Activated naive CD4-positive, alpha-beta T cell treated with anti-CD3 and anti-CD28 coated beads for 36 hours (primary cell): ENCODE measurements at regions of chr11 and their contacts with region 1.

Region 1: DNA sequence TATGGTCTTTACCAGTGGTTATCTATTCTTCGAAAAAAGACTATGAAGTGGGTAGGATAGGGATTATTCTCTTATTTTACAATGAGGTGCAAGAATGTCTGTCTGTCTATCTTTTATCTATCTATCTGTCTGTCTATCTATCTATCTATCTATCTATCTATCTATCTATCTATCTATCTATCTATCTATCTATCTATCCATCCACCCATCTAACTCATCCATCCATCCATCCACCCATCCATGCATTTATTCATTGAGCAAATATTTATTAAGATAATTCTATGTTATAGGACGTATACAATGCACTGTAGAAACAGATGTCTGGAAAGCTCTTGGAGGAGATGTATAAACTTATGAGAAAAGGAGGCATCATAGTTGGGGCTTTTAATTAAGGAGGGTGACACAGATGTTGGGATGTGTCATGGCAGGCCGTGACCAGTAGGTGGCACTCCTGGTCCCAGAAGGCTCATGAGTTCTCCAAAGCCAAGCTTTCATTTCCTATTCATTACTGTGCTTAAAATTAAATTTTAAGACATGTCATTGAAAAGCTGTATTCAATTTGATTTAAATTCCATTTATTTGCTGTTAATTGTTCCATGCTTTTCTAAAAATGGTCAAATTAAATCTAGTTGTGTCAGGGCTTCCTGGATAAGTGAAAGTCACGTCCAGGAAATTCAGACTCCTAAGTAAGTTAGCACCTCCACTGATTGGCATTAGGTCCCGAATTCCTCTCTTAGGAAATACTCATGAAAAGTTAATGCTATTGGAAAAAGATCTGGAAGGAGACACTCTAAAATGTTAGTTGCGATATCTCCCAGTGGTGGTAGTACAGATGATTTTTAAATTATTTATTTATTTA is 19.0 kb upstream of the E2F8 start:
- DNase-seq: peak; percentile 82
- H3K4me3 Mint-ChIP-seq: no peak overlapping the region
- H3K27ac Mint-ChIP-seq: no peak overlapping the region
- H3K4me1 Mint-ChIP-seq: no peaks in the 10 kb centered on the region
- H3K27me3 Mint-ChIP-seq: peaks cover 7% of the 10 kb centered on the region

Region 2: GRCh38 chr11:19232910-19233503 is 26.7 kb before region 1 on chr11:
- CTCF ChIA-PET with region 1: no interaction called
- intact Hi-C with region 1: no loop called
- DNase-seq: no peak
- H3K4me3 Mint-ChIP-seq: no peak overlapping the region
- H3K27ac Mint-ChIP-seq: no peak overlapping the region
- H3K4me1 Mint-ChIP-seq: peaks cover 2% of the 10 kb centered on the region
- H3K27me3 Mint-ChIP-seq: peaks cover 10% of the 10 kb centered on the region

Region 3: GRCh38 chr11:19275481-19275880 is 15.8 kb after region 1 on chr11:
- CTCF ChIA-PET with region 1: interaction called, 11 read pairs
- intact Hi-C with region 1: no loop called
- DNase-seq: no peak
- H3K4me3 Mint-ChIP-seq: no peak overlapping the region
- H3K27ac Mint-ChIP-seq: no peak overlapping the region
- H3K4me1 Mint-ChIP-seq: no peaks in the 10 kb centered on the region
- H3K27me3 Mint-ChIP-seq: peaks cover 8% of the 10 kb centered on the region

Region 4: GRCh38 chr11:19290356-19290755 is 30.6 kb after region 1 on chr11:
- CTCF ChIA-PET with region 1: no interaction called
- intact Hi-C with region 1: no loop called
- DNase-seq: no peak
- H3K4me3 Mint-ChIP-seq: no peak overlapping the region
- H3K27ac Mint-ChIP-seq: no peak overlapping the region
- H3K4me1 Mint-ChIP-seq: no peaks in the 10 kb centered on the region
- H3K27me3 Mint-ChIP-seq: peaks cover 3% of the 10 kb centered on the region

Region 5: GRCh38 chr11:19311308-19312030 is 51.8 kb after region 1 on chr11:
- CTCF ChIA-PET with region 1: no interaction called
- intact Hi-C with region 1: loop called (anchors 5 kb)
- DNase-seq: peak; percentile 60
- H3K4me3 Mint-ChIP-seq: no peak overlapping the region
- H3K27ac Mint-ChIP-seq: no peak overlapping the region
- H3K4me1 Mint-ChIP-seq: no peaks in the 10 kb centered on the region
- H3K27me3 Mint-ChIP-seq: no peaks in the 10 kb centered on the region